Left lung (tissue), 14 donors: ENCODE measurements at regions of chr7 and their contacts with region 1.

Region 1: DNA sequence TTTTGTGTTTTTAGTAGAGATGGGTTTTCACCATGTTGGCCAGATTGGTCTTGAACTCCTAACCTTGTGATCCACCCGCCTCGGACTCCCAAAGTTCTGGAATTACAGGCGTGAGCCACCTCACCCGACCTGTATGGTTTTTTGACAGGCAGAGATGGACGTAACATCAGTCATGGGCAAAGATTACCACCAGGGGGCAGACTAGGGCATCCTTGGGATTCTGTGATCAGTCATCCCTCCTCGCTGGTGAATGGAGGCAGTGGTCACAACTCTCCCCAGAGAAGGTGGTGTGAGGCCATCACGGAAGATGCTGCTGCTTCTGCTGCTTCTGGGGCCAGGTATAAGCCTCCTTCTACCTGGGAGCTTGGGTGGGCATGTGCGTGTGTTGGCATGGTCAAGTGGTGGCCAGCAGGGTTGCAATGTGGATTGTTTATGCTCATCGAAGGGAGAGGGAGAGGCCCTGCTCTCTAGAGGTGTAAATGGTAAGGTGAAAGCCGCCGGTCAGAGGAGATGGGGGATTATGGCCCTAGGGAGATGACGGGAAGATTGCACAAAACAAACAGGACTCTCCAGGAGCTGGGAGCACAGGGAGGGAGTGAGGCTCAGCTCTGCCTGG is 122.7 kb upstream of the PRSS1 start:
- DNase-seq: peak in 2 of 4 donors; percentile 12 to 46
- ATAC-seq: peak; percentile 87
- H3K4me3 ChIP-seq: no peak overlapping the region
- H3K27ac ChIP-seq: no peak overlapping the region
- H3K4me1 ChIP-seq: no peaks in the 10 kb centered on the region
- H3K27me3 ChIP-seq: peaks cover 0 to 8% of the 10 kb centered on the region in 2 donors
- CTCF ChIP-seq: peak; percentile 48 to 67

Region 2: GRCh38 chr7:142782922-142783900 is 156.7 kb after region 1 on chr7:
- intact Hi-C with region 1: loop called in 1 of 2 experiments (anchors 10 kb)
- DNase-seq: peak; percentile 72 to 90 (median 86)
- ATAC-seq: peak; percentile 99
- H3K4me3 ChIP-seq: peak overlapping the region in 1 of 2 donors; percentile 19
- H3K27ac ChIP-seq: no peak overlapping the region
- H3K4me1 ChIP-seq: peaks cover 0 to 5% of the 10 kb centered on the region in 2 donors
- H3K27me3 ChIP-seq: peaks cover 0 to 19% of the 10 kb centered on the region in 2 donors
- CTCF ChIP-seq: peak; percentile 82 to 92